ENCODE measurements at regions of chr20 and their contacts with region 1.

Region 1: DNA sequence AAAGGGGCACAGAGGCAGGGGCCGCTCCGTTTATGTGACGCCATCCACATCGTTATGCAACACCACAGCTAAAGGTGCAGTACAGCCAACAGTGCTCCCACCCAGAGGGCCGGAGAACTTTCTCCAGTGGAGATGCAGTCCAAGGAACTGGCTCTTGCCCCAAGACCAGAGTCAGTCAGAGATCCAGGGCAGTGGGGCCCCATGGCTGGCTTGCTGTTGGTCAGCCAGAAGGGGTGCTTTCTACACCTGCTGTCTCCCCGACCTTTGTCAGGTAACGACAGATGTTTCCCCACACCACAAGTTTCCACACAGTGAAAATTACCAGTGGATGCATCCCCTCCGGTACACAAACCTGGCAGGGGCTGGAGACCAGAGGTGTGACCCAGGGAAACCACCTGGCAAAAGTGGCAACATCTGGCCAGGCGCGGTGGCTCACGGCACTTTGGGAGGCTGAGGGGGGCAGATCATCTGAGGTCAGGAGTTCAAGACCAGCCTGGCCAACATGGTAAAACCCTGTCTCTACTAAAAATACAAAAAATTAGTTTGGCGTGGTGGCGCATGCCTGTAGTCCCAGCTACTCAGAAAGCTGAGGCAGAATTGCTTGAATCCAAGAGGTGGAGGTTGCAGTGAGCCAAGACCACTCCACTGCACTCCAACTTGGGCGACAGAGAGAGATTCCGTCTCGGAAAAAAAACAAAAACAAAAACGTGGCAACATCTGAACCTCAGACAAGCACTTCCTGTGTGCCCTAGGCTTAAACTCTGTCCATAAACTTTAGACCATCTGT is 34.9 kb downstream of the UBE2V1 start:
- DNase-seq: peak in 1 of 2 experiments; percentile 45
- H3K4me3 ChIP-seq: no peak overlapping the region
- H3K4me3 Mint-ChIP-seq: no peak overlapping the region
- H3K27ac Mint-ChIP-seq: no peak overlapping the region
- H3K4me1 ChIP-seq: peaks cover 19% of the 10 kb centered on the region
- H3K4me1 Mint-ChIP-seq: peaks cover 17% of the 10 kb centered on the region
- H3K27me3 ChIP-seq: no peaks in the 10 kb centered on the region
- H3K27me3 Mint-ChIP-seq: no peaks in the 10 kb centered on the region
- CTCF ChIP-seq: no peak

Region 2: GRCh38 chr20:50005471-50005981 is 72.5 kb before region 1 on chr20:
- CTCF ChIA-PET with region 1: interaction called, 8 read pairs
- POLR2A ChIA-PET with region 1: interaction called, 10 read pairs
- intact Hi-C with region 1: no loop called
- DNase-seq: no peak
- H3K4me3 ChIP-seq: no peak overlapping the region
- H3K4me3 Mint-ChIP-seq: no peak overlapping the region
- H3K27ac Mint-ChIP-seq: no peak overlapping the region
- H3K4me1 ChIP-seq: peaks cover 4% of the 10 kb centered on the region; the same call in 1 of the 2 replicates
- H3K4me1 Mint-ChIP-seq: peaks cover 6% of the 10 kb centered on the region
- H3K27me3 ChIP-seq: no peaks in the 10 kb centered on the region
- H3K27me3 Mint-ChIP-seq: no peaks in the 10 kb centered on the region
- CTCF ChIP-seq: no peak

Measured in Caco-2 (cell line).